ENCODE measurements at regions of chr3 and their contacts with region 1.

Region 1: GRCh38 chr3:4350789-4351163 is 47.6 kb downstream of the SETMAR start:
- DNase-seq: peak in 8 of 9 experiments; percentile 27 to 87 (median 50)
- ATAC-seq: peak; percentile 86
- H3K4me3 ChIP-seq: peak overlapping the region; percentile 6 to 49
- H3K4me3 Mint-ChIP-seq: peak overlapping the region; percentile 77
- H3K27ac ChIP-seq: peak overlapping the region; percentile 63
- H3K27ac Mint-ChIP-seq: peak overlapping the region; percentile 25
- H3K4me1 ChIP-seq: no peaks in the 10 kb centered on the region
- H3K4me1 Mint-ChIP-seq: peaks cover 15% of the 10 kb centered on the region
- H3K27me3 ChIP-seq: no peaks in the 10 kb centered on the region
- H3K27me3 Mint-ChIP-seq: no peaks in the 10 kb centered on the region
- CTCF ChIP-seq: peak; percentile 82

Region 2: DNA sequence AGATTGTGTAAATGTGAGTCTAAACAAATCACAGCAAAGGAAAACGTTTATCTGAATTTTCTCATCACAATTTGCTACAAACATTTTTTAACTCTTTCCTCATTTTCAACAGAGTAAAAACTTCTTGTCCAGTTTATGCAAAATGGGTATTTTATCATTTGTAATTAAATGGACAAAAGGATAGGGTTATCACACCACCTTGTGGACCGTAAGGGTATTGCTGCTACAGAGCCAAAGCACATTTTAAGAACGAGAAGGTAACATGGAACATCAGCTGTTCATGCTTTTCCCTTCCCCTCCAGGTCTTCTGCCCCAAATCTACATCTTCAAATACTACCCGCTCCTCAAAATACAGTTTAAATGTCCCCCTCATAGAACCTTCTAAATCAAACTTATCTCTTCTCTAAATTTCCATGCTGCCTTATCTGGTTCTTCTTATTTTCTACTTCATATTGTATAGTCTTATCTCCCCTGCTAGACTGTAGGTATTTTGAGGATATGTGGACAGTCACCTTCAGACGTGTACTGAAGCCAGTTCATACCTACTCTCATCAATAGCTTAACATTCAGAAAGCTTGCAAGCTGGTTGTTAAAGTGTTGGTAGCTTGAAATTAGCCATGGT is 60.4 kb before region 1 on chr3:
- CTCF ChIA-PET with region 1: no interaction called
- POLR2A ChIA-PET with region 1: no interaction called
- intact Hi-C with region 1: no loop called
- DNase-seq: peak in 5 of 9 experiments; percentile 8 to 69 (median 39)
- ATAC-seq: peak; percentile 81
- H3K4me3 ChIP-seq: no peak overlapping the region
- H3K4me3 Mint-ChIP-seq: no peak overlapping the region
- H3K27ac ChIP-seq: no peak overlapping the region
- H3K27ac Mint-ChIP-seq: no peak overlapping the region
- H3K4me1 ChIP-seq: peaks cover 11% of the 10 kb centered on the region
- H3K4me1 Mint-ChIP-seq: peaks cover 17% of the 10 kb centered on the region
- H3K27me3 ChIP-seq: no peaks in the 10 kb centered on the region
- H3K27me3 Mint-ChIP-seq: no peaks in the 10 kb centered on the region
- CTCF ChIP-seq: peak; percentile 97

Region 3: DNA sequence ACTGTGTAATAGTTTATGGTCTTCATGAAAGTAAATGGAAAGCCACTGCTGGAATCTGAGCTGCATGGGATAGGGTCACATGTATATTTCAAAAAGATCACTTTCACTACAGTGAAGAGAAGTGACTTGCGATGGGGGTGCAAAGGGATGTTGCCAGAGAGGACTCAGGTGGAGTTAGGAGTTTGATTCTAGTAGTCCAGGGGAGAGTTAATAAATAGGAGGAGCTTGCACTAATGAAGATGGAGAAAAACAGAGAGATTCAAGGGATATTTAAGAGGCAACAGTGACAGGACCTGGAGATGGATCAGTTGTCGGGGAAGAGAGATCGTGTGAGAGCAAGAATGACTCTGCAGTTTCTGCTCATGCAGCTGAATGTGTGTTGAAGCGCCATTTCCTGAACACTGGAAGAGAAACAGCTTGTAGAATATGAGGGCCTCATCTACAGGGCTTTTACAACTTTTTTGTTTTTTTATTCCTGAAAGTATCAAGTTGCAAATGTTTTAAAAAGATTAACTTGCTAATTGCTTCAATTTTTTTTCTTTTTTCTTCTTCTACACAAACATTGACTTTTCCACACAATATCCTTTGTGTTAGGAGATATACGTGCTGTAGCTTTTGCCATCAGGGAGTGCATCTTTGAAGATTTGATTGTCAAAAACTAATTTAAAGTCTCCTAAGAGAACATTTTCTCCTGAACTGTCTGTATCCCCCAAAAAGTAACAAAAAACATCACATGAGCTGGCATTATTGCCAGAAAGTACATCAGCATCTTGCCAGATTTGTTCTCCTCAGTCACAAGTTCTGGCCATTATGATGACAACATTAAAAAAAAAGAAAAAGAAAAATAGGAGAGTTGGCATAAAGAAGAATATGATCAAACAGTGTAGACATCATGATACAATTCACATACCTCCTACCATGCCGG is 10.1 kb before region 1 on chr3:
- CTCF ChIA-PET with region 1: interaction called, 15 read pairs
- POLR2A ChIA-PET with region 1: no interaction called
- intact Hi-C with region 1: no loop called
- DNase-seq: no peak
- ATAC-seq: no peak
- H3K4me3 ChIP-seq: no peak overlapping the region
- H3K4me3 Mint-ChIP-seq: no peak overlapping the region
- H3K27ac ChIP-seq: no peak overlapping the region
- H3K27ac Mint-ChIP-seq: no peak overlapping the region
- H3K4me1 ChIP-seq: no peaks in the 10 kb centered on the region
- H3K4me1 Mint-ChIP-seq: no peaks in the 10 kb centered on the region
- H3K27me3 ChIP-seq: no peaks in the 10 kb centered on the region
- H3K27me3 Mint-ChIP-seq: no peaks in the 10 kb centered on the region
- CTCF ChIP-seq: no peak

Region 4: GRCh38 chr3:4426601-4427344 is 76.0 kb after region 1 on chr3:
- CTCF ChIA-PET with region 1: interaction called, 6 read pairs
- POLR2A ChIA-PET with region 1: no interaction called
- intact Hi-C with region 1: loop called in 1 of 2 experiments (anchors 10 kb)
- DNase-seq: no peak
- ATAC-seq: no peak
- H3K4me3 ChIP-seq: no peak overlapping the region
- H3K4me3 Mint-ChIP-seq: no peak overlapping the region
- H3K27ac ChIP-seq: no peak overlapping the region
- H3K27ac Mint-ChIP-seq: no peak overlapping the region
- H3K4me1 ChIP-seq: no peaks in the 10 kb centered on the region
- H3K4me1 Mint-ChIP-seq: peaks cover 5% of the 10 kb centered on the region
- H3K27me3 ChIP-seq: no peaks in the 10 kb centered on the region
- H3K27me3 Mint-ChIP-seq: no peaks in the 10 kb centered on the region
- CTCF ChIP-seq: no peak

Region 5: GRCh38 chr3:4524088-4525023 is 173.6 kb after region 1 on chr3:
- CTCF ChIA-PET with region 1: interaction called, 10 read pairs
- POLR2A ChIA-PET with region 1: no interaction called
- intact Hi-C with region 1: loop called (anchors 1 kb)
- DNase-seq: no peak
- ATAC-seq: no peak
- H3K4me3 ChIP-seq: no peak overlapping the region
- H3K4me3 Mint-ChIP-seq: no peak overlapping the region
- H3K27ac ChIP-seq: no peak overlapping the region
- H3K27ac Mint-ChIP-seq: no peak overlapping the region
- H3K4me1 ChIP-seq: peaks cover 5% of the 10 kb centered on the region
- H3K4me1 Mint-ChIP-seq: peaks cover 35% of the 10 kb centered on the region
- H3K27me3 ChIP-seq: no peaks in the 10 kb centered on the region
- H3K27me3 Mint-ChIP-seq: no peaks in the 10 kb centered on the region
- CTCF ChIP-seq: no peak

Region 6: DNA sequence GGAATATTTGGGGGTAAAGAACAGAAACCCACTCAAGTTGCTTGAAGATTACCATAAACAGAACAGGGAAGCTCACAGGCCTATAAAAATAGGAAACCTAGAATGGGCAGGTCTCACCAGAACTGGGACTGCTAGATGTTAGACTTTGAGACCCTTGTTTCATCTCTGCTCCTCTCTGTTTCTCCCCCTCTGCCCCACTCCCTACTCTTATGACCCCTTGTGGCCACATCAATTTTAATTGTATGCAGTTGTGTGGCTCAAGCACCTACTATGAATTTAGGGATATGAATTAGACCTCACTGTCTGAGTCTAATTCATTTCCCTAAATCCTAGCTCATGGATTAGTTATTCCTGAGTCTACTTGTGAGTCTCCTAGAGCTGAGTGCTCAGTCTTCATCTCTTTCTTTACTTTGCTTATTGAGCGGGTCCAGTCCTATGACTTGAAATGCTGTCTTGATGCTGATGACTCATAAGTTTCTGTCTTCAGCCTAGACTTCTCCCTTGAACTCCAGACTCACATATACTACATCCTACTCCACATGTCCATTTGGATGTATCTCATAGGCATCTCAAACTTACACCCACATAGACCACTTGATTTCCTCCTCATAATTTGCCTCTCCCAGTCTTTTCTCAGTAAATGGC is 221.0 kb after region 1 on chr3:
- CTCF ChIA-PET with region 1: interaction called, 5 read pairs
- POLR2A ChIA-PET with region 1: no interaction called
- intact Hi-C with region 1: loop called in 1 of 2 experiments (anchors 2 kb)
- DNase-seq: peak in 2 of 9 experiments; percentile 32 to 48
- ATAC-seq: peak; percentile 52
- H3K4me3 ChIP-seq: no peak overlapping the region
- H3K4me3 Mint-ChIP-seq: no peak overlapping the region
- H3K27ac ChIP-seq: no peak overlapping the region
- H3K27ac Mint-ChIP-seq: no peak overlapping the region
- H3K4me1 ChIP-seq: no peaks in the 10 kb centered on the region
- H3K4me1 Mint-ChIP-seq: peaks cover 17% of the 10 kb centered on the region
- H3K27me3 ChIP-seq: no peaks in the 10 kb centered on the region
- H3K27me3 Mint-ChIP-seq: no peaks in the 10 kb centered on the region
- CTCF ChIP-seq: no peak

Region 7: DNA sequence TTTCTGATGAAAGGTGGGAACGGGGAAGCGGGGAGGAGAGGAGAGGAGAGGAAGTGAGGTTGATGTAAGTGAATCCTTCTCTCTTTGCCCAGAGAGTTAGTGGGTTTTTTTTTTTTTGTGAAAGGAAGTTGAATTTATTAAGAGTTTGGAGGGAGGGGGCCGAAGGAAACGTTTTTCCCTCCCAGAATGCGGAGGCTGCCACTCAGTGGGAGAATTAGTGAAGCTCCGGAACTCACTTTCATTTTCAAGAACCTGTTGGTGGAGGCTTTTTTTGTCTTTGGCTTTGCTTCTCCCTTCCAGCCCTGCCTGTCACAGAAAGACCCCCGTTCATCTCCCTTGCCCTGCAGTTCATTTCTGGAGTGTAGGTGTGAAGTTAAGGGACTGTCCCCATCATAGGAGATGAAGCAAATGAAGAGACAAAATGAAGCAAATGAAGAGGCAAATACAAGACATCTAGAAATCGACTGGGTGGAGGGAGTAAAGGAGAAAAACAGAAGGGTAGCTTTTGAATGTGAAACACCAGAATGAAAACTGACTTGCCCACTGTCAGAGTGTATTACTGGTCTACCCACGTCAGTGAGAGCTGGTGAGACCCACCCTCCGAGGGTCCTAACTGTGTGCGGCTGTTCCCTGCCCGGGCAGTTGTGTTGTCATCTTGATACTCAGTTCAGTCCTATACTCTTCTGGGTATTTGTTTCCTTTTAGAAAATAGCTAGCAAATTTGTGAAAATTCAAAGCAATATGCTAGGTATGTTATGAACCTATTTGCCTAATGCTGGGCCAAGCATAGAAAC is 233.9 kb after region 1 on chr3:
- CTCF ChIA-PET with region 1: interaction called, 6 read pairs
- POLR2A ChIA-PET with region 1: no interaction called
- intact Hi-C with region 1: loop called (anchors 1 to 5 kb)
- DNase-seq: peak in 2 of 9 experiments; percentile 40 to 60
- ATAC-seq: peak; percentile 64
- H3K4me3 ChIP-seq: peak overlapping the region; percentile 21 to 38
- H3K4me3 Mint-ChIP-seq: peak overlapping the region; percentile 84
- H3K27ac ChIP-seq: peak overlapping the region; percentile 18 to 22
- H3K27ac Mint-ChIP-seq: peak overlapping the region; percentile 88
- H3K4me1 ChIP-seq: peaks cover 26% of the 10 kb centered on the region
- H3K4me1 Mint-ChIP-seq: peaks cover 82% of the 10 kb centered on the region
- H3K27me3 ChIP-seq: no peaks in the 10 kb centered on the region
- H3K27me3 Mint-ChIP-seq: no peaks in the 10 kb centered on the region
- CTCF ChIP-seq: no peak

Region 8: DNA sequence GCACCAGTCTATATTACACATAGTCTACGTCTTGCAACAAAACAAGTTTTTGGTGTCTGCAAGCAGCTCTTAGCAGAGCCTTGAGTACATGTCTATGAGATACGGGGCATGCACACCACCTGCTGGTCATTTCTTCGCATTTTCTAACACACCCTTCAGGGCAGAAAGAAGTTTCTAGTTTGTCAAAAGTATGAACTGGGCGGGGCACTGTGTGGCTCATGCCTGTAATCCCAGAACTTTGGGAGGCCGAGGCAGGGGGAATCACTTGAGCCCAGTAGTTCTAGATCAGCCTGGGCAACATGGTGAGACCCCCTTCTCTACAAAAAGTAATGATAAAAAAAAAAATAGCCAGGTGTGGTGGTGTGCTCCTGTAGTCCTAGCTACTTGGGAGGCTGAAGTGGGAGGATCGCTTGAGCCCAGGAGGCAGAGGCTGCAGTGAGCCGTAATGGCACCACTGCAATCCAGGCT is 707.1 kb after region 1 on chr3:
- CTCF ChIA-PET with region 1: interaction called, 4 read pairs
- POLR2A ChIA-PET with region 1: no interaction called
- intact Hi-C with region 1: loop called (anchors 1 to 5 kb)
- DNase-seq: peak; percentile 34 to 87 (median 69)
- ATAC-seq: peak; percentile 96
- H3K4me3 ChIP-seq: no peak overlapping the region
- H3K4me3 Mint-ChIP-seq: no peak overlapping the region
- H3K27ac ChIP-seq: no peak overlapping the region
- H3K27ac Mint-ChIP-seq: no peak overlapping the region
- H3K4me1 ChIP-seq: no peaks in the 10 kb centered on the region
- H3K4me1 Mint-ChIP-seq: no peaks in the 10 kb centered on the region
- H3K27me3 ChIP-seq: peaks cover 0 to 4% of the 10 kb centered on the region in 2 experiments
- H3K27me3 Mint-ChIP-seq: peaks cover 2% of the 10 kb centered on the region
- CTCF ChIP-seq: peak; percentile 63